HCT116 (cell line): ENCODE measurements at regions of chr17 and their contacts with region 1.

Region 1: GRCh38 chr17:27206447-27206846 is 87.5 kb upstream of the WSB1 start:
- DNase-seq: peak; percentile 23
- ATAC-seq: peak; percentile 94
- H3K4me3 ChIP-seq: no peak overlapping the region
- H3K27ac ChIP-seq: no peak overlapping the region
- H3K4me1 ChIP-seq: peaks cover 5 to 14% of the 10 kb centered on the region in 2 experiments; a peak in 3 of 4 replicates
- H3K27me3 ChIP-seq: no peaks in the 10 kb centered on the region
- CTCF ChIP-seq: peak in 2 of 3 experiments; percentile 74 to 76; a peak in 4 of 6 replicates
- POLR2A ChIP-seq: no peak
- RAD21 ChIP-seq: peak; percentile 18; the same call in 1 of the 2 replicates

Region 2: GRCh38 chr17:27217631-27218030 is 11.2 kb after region 1 on chr17:
- CTCF ChIA-PET with region 1: interaction called, 20 read pairs
- POLR2A ChIA-PET with region 1: no interaction called
- RAD21 ChIA-PET with region 1: no interaction called
- intact Hi-C with region 1: no loop called
- DNase-seq: no peak
- ATAC-seq: no peak
- H3K4me3 ChIP-seq: no peak overlapping the region
- H3K27ac ChIP-seq: no peak overlapping the region
- H3K4me1 ChIP-seq: no peaks in the 10 kb centered on the region
- H3K27me3 ChIP-seq: no peaks in the 10 kb centered on the region
- CTCF ChIP-seq: no peak
- POLR2A ChIP-seq: no peak
- RAD21 ChIP-seq: no peak

Region 3: DNA sequence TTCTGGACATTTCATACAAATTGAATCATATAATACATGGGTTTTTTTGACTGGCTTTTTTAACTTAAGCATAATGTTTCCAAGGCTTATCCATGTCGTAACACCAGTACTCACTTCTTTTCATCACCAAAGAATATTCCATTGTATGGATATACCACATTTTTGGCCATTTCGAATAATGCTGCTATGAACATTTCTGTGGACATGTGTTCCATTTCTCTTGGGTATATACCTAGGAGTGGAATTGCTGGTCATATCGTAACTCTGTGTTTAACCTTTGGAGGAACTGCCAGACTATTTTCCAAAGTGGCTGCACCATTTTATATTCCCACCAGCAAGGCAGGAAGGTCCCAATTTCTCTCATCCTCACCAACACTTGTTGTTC is 41.5 kb after region 1 on chr17:
- CTCF ChIA-PET with region 1: no interaction called
- POLR2A ChIA-PET with region 1: no interaction called
- RAD21 ChIA-PET with region 1: no interaction called
- intact Hi-C with region 1: no loop called
- DNase-seq: no peak
- ATAC-seq: no peak
- H3K4me3 ChIP-seq: no peak overlapping the region
- H3K27ac ChIP-seq: no peak overlapping the region
- H3K4me1 ChIP-seq: peaks cover 3 to 20% of the 10 kb centered on the region in 2 experiments; a peak in 3 of 4 replicates
- H3K27me3 ChIP-seq: no peaks in the 10 kb centered on the region
- CTCF ChIP-seq: no peak
- POLR2A ChIP-seq: no peak
- RAD21 ChIP-seq: no peak

Region 4: DNA sequence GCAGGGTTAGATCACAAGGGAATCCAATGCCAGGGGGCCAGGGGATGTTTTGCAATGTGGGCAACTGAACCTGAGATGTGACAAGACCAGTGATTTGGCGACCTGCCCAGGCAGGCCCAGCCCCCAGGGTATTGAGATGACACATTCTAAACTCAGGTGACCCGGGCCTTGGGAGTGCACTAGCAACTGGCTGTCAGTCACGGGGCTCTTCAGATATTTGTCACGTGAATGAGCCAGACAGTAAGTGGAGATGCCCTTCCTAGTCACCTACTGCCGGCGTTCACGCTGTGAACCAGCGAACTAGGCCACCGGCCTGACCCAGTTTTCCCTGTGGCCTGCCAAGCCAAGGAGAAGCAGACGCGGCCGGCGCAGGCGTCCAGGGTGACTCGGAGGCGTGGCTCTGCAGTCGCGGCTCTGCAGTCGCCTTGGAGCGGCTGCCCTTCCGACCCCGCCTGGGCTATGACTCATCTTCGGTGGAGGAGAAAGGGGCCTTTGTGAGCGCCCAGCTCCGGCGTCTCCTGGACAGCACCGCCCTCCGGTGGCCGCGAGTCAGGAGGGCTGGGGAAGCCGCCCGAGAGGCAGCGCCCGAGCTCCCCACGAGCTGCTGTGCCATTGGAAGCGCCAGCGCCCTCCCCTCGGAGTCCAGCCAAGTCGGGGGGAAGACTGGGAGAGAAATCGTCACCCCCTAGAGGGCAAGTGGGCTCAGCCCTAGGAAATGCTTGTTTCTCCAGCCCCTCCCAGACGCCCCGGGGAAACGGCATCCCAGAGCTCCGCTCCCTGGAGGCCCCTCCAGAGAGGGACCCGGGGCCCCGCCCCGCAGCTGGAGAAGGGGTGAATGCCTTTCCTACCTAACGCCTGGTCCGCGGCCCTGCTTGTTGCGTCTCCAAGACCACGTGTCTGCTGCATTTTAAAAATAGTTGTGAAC is 126.3 kb after region 1 on chr17:
- CTCF ChIA-PET with region 1: interaction called, 12 read pairs
- POLR2A ChIA-PET with region 1: no interaction called
- RAD21 ChIA-PET with region 1: no interaction called
- intact Hi-C with region 1: no loop called
- DNase-seq: peak; percentile 97
- ATAC-seq: peak; percentile 90
- H3K4me3 ChIP-seq: peak overlapping the region; percentile 43 to 57
- H3K27ac ChIP-seq: peak overlapping the region; percentile 92
- H3K4me1 ChIP-seq: peaks cover 31 to 35% of the 10 kb centered on the region in 2 experiments
- H3K27me3 ChIP-seq: no peaks in the 10 kb centered on the region
- CTCF ChIP-seq: peak; percentile 70 to 85 (median 73)
- POLR2A ChIP-seq: peak; percentile 2
- RAD21 ChIP-seq: peak; percentile 95